B cell (primary cell): ENCODE measurements at regions of chr2 and their contacts with region 1.

Region 1: GRCh38 chr2:32063310-32064161 is at the start of gene SPAST:
- DNase-seq: peak; percentile 99
- ATAC-seq: peak; percentile 90
- H3K4me3 ChIP-seq: peak within 1 kb of the TSS; percentile 83 to 96 (median 89)
- H3K4me3 Mint-ChIP-seq: peak within 1 kb of the TSS; percentile 99
- H3K27ac ChIP-seq: peak within 1 kb of the TSS; percentile 71 to 78
- H3K27ac Mint-ChIP-seq: peak within 1 kb of the TSS; percentile 97
- H3K4me1 ChIP-seq: peaks cover 12 to 21% of the 10 kb centered on the region in 2 donors
- H3K4me1 Mint-ChIP-seq: peaks cover 32% of the 10 kb centered on the region
- H3K27me3 ChIP-seq: no peaks in the 10 kb centered on the region
- H3K27me3 Mint-ChIP-seq: no peaks in the 10 kb centered on the region
- CTCF ChIP-seq: peak; percentile 47
- total RNA-seq, gene SPAST: 26.8 and 28.9 TPM in 2 replicates

Region 2: GRCh38 chr2:31089645-31090044 is 973.9 kb before region 1 on chr2:
- CTCF ChIA-PET with region 1: no interaction called
- POLR2A ChIA-PET with region 1: no interaction called
- intact Hi-C with region 1: no loop called
- DNase-seq: no peak
- ATAC-seq: no peak
- H3K4me3 ChIP-seq: no peak overlapping the region
- H3K4me3 Mint-ChIP-seq: no peak overlapping the region
- H3K27ac ChIP-seq: no peak overlapping the region
- H3K27ac Mint-ChIP-seq: no peak overlapping the region
- H3K4me1 ChIP-seq: no peaks in the 10 kb centered on the region
- H3K4me1 Mint-ChIP-seq: no peaks in the 10 kb centered on the region
- H3K27me3 ChIP-seq: no peaks in the 10 kb centered on the region
- H3K27me3 Mint-ChIP-seq: no peaks in the 10 kb centered on the region
- CTCF ChIP-seq: no peak

Region 3: GRCh38 chr2:31980674-31981356 is 82.7 kb before region 1 on chr2:
- CTCF ChIA-PET with region 1: no interaction called
- POLR2A ChIA-PET with region 1: no interaction called
- intact Hi-C with region 1: loop called (anchors 1 kb)
- DNase-seq: peak; percentile 85
- ATAC-seq: peak; percentile 100
- H3K4me3 ChIP-seq: peak overlapping the region in 1 of 5 experiments; percentile 13
- H3K4me3 Mint-ChIP-seq: peak overlapping the region; percentile 57
- H3K27ac ChIP-seq: peak overlapping the region; percentile 81 to 90
- H3K27ac Mint-ChIP-seq: peak overlapping the region; percentile 89
- H3K4me1 ChIP-seq: peaks cover 14 to 16% of the 10 kb centered on the region in 2 donors
- H3K4me1 Mint-ChIP-seq: peaks cover 25% of the 10 kb centered on the region
- H3K27me3 ChIP-seq: no peaks in the 10 kb centered on the region
- H3K27me3 Mint-ChIP-seq: no peaks in the 10 kb centered on the region
- CTCF ChIP-seq: no peak

Region 4: DNA sequence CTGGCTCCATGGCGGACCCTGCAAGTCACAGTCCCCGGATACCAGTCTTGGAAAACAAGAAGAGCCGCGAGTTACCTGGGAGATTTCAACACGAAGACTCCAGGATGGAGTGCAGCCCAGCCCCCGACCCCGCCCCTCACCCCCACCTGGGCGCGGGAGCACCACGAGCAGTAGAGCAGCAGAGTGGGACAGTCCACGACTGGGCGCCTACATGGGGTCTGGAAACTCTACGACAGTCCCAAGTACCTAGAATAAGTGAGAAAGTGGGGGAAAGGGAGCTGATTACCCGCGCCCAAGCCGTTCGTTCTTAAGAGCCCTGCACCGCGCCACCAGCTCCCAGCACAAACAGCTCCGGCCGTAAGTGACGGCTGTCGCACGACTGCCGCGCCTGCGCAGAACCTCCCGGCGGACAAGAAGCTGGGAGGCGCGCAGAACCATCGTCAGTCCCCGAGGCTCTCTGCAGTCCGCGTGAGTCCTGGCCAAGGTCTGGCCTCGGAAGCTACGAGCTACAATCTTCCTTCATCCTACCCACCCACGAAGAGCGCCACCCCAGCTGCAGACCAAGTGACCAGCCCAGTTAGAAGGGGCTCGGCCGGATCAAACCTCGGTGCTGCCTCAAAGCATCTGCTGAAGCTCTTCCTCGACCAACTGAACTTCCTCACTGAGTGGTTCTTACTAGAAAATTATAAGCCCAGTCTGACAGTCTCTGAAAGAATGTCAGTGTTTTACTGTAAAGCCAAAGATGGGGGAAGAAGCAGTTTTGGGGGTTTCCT is 23.9 kb before region 1 on chr2 and contains the start of gene DPY30:
- CTCF ChIA-PET with region 1: interaction called, 16 read pairs
- POLR2A ChIA-PET with region 1: interaction called, 27 read pairs
- intact Hi-C with region 1: loop called (anchors 1 kb)
- DNase-seq: peak; percentile 94
- ATAC-seq: peak; percentile 95
- H3K4me3 ChIP-seq: peak within 1 kb of the TSS; percentile 58 to 86 (median 78)
- H3K4me3 Mint-ChIP-seq: peak within 1 kb of the TSS; percentile 97
- H3K27ac ChIP-seq: peak within 1 kb of the TSS; percentile 73 to 76
- H3K27ac Mint-ChIP-seq: peak within 1 kb of the TSS; percentile 97
- H3K4me1 ChIP-seq: peaks cover 5 to 12% of the 10 kb centered on the region in 2 donors
- H3K4me1 Mint-ChIP-seq: peaks cover 19% of the 10 kb centered on the region
- H3K27me3 ChIP-seq: no peaks in the 10 kb centered on the region
- H3K27me3 Mint-ChIP-seq: no peaks in the 10 kb centered on the region
- CTCF ChIP-seq: no peak
- total RNA-seq, gene DPY30: 42.0 and 43.4 TPM in 2 replicates

Region 5: GRCh38 chr2:32051836-32052439 is 11.6 kb before region 1 on chr2:
- CTCF ChIA-PET with region 1: no interaction called
- POLR2A ChIA-PET with region 1: no interaction called
- intact Hi-C with region 1: no loop called
- DNase-seq: no peak
- ATAC-seq: no peak
- H3K4me3 ChIP-seq: no peak overlapping the region
- H3K4me3 Mint-ChIP-seq: no peak overlapping the region
- H3K27ac ChIP-seq: no peak overlapping the region
- H3K27ac Mint-ChIP-seq: no peak overlapping the region
- H3K4me1 ChIP-seq: no peaks in the 10 kb centered on the region
- H3K4me1 Mint-ChIP-seq: no peaks in the 10 kb centered on the region
- H3K27me3 ChIP-seq: no peaks in the 10 kb centered on the region
- H3K27me3 Mint-ChIP-seq: no peaks in the 10 kb centered on the region
- CTCF ChIP-seq: no peak

Region 6: DNA sequence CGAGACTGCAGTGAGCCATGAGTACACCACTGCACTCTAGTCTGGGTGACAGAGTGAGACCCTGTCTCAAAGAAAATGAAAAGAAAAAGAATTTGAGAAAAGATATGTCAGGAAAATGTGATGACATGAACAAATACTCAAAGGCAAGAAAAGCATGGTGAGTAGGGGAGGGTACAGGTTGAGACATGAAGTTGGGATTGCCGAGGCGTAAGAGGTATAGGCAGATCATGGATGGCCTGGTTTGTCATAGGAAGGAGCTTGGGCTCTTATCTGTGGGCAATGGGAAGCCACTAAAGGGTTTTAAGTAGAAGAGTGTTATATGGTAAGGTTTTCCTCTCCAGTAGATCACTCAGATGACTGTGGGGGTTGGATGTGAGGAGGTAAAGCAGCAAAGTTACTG is 32.1 kb after region 1 on chr2:
- CTCF ChIA-PET with region 1: no interaction called
- POLR2A ChIA-PET with region 1: no interaction called
- intact Hi-C with region 1: no loop called
- DNase-seq: no peak
- ATAC-seq: no peak
- H3K4me3 ChIP-seq: no peak overlapping the region
- H3K4me3 Mint-ChIP-seq: no peak overlapping the region
- H3K27ac ChIP-seq: no peak overlapping the region
- H3K27ac Mint-ChIP-seq: no peak overlapping the region
- H3K4me1 ChIP-seq: no peaks in the 10 kb centered on the region
- H3K4me1 Mint-ChIP-seq: no peaks in the 10 kb centered on the region
- H3K27me3 ChIP-seq: no peaks in the 10 kb centered on the region
- H3K27me3 Mint-ChIP-seq: no peaks in the 10 kb centered on the region
- CTCF ChIP-seq: no peak

Region 7: GRCh38 chr2:32168513-32168912 is 105.0 kb after region 1 on chr2:
- CTCF ChIA-PET with region 1: no interaction called
- POLR2A ChIA-PET with region 1: interaction called, 11 read pairs
- intact Hi-C with region 1: loop called (anchors 5 kb)
- DNase-seq: no peak
- ATAC-seq: no peak
- H3K4me3 ChIP-seq: no peak overlapping the region
- H3K4me3 Mint-ChIP-seq: no peak overlapping the region
- H3K27ac ChIP-seq: no peak overlapping the region
- H3K27ac Mint-ChIP-seq: no peak overlapping the region
- H3K4me1 ChIP-seq: peaks cover 12 to 18% of the 10 kb centered on the region in 2 donors
- H3K4me1 Mint-ChIP-seq: peaks cover 30% of the 10 kb centered on the region
- H3K27me3 ChIP-seq: no peaks in the 10 kb centered on the region
- H3K27me3 Mint-ChIP-seq: no peaks in the 10 kb centered on the region
- CTCF ChIP-seq: no peak

Region 8: GRCh38 chr2:32277674-32278482 is 214.3 kb after region 1 on chr2 and contains the start of gene YIPF4:
- CTCF ChIA-PET with region 1: no interaction called
- POLR2A ChIA-PET with region 1: no interaction called
- intact Hi-C with region 1: loop called (anchors 1 kb)
- DNase-seq: peak; percentile 96
- ATAC-seq: peak; percentile 98
- H3K4me3 ChIP-seq: peak within 1 kb of the TSS; percentile 70 to 98 (median 94)
- H3K4me3 Mint-ChIP-seq: peak within 1 kb of the TSS; percentile 91
- H3K27ac ChIP-seq: peak within 1 kb of the TSS; percentile 66 to 95
- H3K27ac Mint-ChIP-seq: peak within 1 kb of the TSS; percentile 97
- H3K4me1 ChIP-seq: peaks cover 12 to 20% of the 10 kb centered on the region in 2 donors
- H3K4me1 Mint-ChIP-seq: peaks cover 23% of the 10 kb centered on the region
- H3K27me3 ChIP-seq: no peaks in the 10 kb centered on the region
- H3K27me3 Mint-ChIP-seq: peaks cover 12% of the 10 kb centered on the region
- CTCF ChIP-seq: no peak
- total RNA-seq, gene YIPF4: 38.0 and 42.4 TPM in 2 replicates

Region 9: GRCh38 chr2:32356735-32357644 is 293.5 kb after region 1 on chr2 and contains the start of gene BIRC6:
- CTCF ChIA-PET with region 1: interaction called, 7 read pairs
- POLR2A ChIA-PET with region 1: no interaction called
- intact Hi-C with region 1: loop called (anchors 1 kb)
- DNase-seq: peak; percentile 97
- ATAC-seq: peak; percentile 86
- H3K4me3 ChIP-seq: peak within 1 kb of the TSS; percentile 63 to 98 (median 97)
- H3K4me3 Mint-ChIP-seq: peak within 1 kb of the TSS; percentile 91
- H3K27ac ChIP-seq: peak within 1 kb of the TSS; percentile 91 to 92
- H3K27ac Mint-ChIP-seq: peak within 1 kb of the TSS; percentile 98
- H3K4me1 ChIP-seq: peaks cover 34 to 36% of the 10 kb centered on the region in 2 donors
- H3K4me1 Mint-ChIP-seq: peaks cover 40% of the 10 kb centered on the region
- H3K27me3 ChIP-seq: no peaks in the 10 kb centered on the region
- H3K27me3 Mint-ChIP-seq: no peaks in the 10 kb centered on the region
- CTCF ChIP-seq: no peak
- total RNA-seq, gene BIRC6: 166 and 196 TPM in 2 replicates